PC-9 (cell line): ENCODE measurements at regions of chr16 and their contacts with region 1.

Region 1: DNA sequence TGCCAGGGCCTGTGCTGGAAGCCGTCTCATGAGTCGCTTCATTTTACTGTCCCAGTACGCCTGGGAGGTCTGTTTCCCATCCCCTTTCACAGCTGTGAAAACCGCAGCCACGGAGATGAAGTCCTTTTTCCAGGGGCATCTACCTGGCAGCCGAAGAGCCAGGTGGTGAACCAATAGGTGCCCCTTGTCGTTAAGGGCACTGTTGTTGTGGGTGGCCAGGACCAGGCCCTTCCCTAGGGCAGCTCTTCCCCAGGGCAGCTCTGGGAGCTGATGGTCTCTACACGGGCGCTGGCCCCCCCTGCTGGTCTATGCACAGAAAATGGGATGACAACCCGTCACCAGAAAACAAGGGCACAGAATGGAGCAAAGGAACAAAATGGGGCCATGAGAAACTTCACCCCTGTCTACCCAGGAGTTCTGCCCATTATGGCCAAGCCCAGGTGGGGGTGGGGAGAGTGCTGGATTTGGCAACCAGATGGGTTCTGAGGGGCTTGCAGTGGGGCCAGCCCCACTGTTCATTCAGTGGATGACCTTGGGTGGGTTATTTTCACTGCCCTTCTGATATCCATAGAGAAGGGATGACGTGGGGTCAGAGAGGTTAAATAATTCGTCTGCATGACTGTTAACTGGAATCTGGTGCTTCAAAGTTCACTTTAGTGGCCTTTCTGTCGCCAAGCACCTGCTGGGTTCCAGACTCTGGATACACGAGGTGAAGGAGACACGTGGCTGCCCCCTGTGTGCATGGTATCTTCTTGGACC is 11.5 kb downstream of the RMI2 start:
- DNase-seq: peak in 1 of 2 experiments; percentile 48
- H3K4me3 ChIP-seq: 0 out of 2 replicates have a peak overlapping the region, but pooled peaks have one; percentile 20
- H3K27ac ChIP-seq: peak overlapping the region; percentile 81
- H3K4me1 ChIP-seq: peaks cover 44% of the 10 kb centered on the region
- H3K27me3 ChIP-seq: no peaks in the 10 kb centered on the region
- CTCF ChIP-seq: peak; percentile 49; the same call in 1 of the 2 replicates

Region 2: GRCh38 chr16:10971560-10971961 is 385.2 kb before region 1 on chr16:
- CTCF ChIA-PET with region 1: no interaction called
- POLR2A ChIA-PET with region 1: interaction called, 4 read pairs
- intact Hi-C with region 1: loop called (anchors 1 kb)
- DNase-seq: peak; percentile 80 to 82
- H3K4me3 ChIP-seq: no peak overlapping the region
- H3K27ac ChIP-seq: no peak overlapping the region
- H3K4me1 ChIP-seq: peaks cover 9% of the 10 kb centered on the region
- H3K27me3 ChIP-seq: no peaks in the 10 kb centered on the region
- CTCF ChIP-seq: peak; percentile 89

Region 3: GRCh38 chr16:11201498-11202259 is 155.1 kb before region 1 on chr16:
- CTCF ChIA-PET with region 1: no interaction called
- POLR2A ChIA-PET with region 1: no interaction called
- intact Hi-C with region 1: loop called (anchors 2 kb)
- DNase-seq: peak; percentile 89 to 94
- H3K4me3 ChIP-seq: peak overlapping the region; percentile 28; the same call in 1 of the 2 replicates
- H3K27ac ChIP-seq: peak overlapping the region; percentile 75
- H3K4me1 ChIP-seq: peaks cover 37% of the 10 kb centered on the region
- H3K27me3 ChIP-seq: no peaks in the 10 kb centered on the region
- CTCF ChIP-seq: no peak

Region 4: GRCh38 chr16:11333711-11334110 is 23.0 kb before region 1 on chr16:
- CTCF ChIA-PET with region 1: no interaction called
- POLR2A ChIA-PET with region 1: interaction called, 16 read pairs
- intact Hi-C with region 1: no loop called
- DNase-seq: peak; percentile 29 to 92
- H3K4me3 ChIP-seq: no peak overlapping the region
- H3K27ac ChIP-seq: peak overlapping the region; percentile 40; the same call in 1 of the 2 replicates
- H3K4me1 ChIP-seq: peaks cover 21% of the 10 kb centered on the region
- H3K27me3 ChIP-seq: no peaks in the 10 kb centered on the region
- CTCF ChIP-seq: no peak

Region 5: DNA sequence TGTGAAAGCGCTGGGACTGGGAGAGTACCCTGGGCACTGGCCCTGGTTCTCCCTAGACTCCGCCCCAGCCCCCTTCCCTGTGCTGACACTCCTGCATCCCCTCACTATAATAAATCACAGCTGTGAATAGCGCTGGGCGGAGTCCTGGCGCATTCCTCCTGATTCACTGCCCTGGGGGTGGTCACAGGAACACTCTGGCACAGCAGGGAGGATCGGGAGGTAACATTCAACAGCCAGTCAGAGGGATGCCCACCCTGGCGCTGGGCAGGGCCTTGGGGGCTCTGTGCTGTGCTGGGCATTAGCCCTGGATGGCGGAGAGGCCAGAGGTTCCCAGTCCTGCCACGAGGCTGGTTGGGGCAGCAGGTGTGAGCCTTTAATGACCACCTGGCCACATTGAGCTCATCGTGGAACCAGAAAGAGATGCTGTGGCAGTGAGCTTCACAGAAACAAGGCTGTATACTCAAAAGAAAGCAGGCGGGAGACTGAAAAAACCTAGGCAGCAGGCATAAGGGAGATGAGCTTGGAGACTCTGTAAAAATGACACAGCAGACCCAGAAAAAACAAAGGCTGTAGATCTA is 34.3 kb after region 1 on chr16:
- CTCF ChIA-PET with region 1: no interaction called
- POLR2A ChIA-PET with region 1: interaction called, 3 read pairs
- intact Hi-C with region 1: loop called (anchors 1 kb)
- DNase-seq: peak in 1 of 2 experiments; percentile 38
- H3K4me3 ChIP-seq: no peak overlapping the region
- H3K27ac ChIP-seq: no peak overlapping the region
- H3K4me1 ChIP-seq: 0 out of 2 replicates have a peak, but pooled peaks cover 5% of the 10 kb centered on the region
- H3K27me3 ChIP-seq: no peaks in the 10 kb centered on the region
- CTCF ChIP-seq: no peak